Activated B cell treated with CpG ODN at 0.5 μM for 24 hours (primary cell): ENCODE measurements at regions of chr3 and their contacts with region 1.

Region 1: GRCh38 chr3:195106418-195106906 is 164.5 kb downstream of the XXYLT1 start:
- DNase-seq: peak; percentile 86
- ATAC-seq: peak; percentile 98
- H3K4me3 Mint-ChIP-seq: peak overlapping the region; percentile 67
- H3K27ac Mint-ChIP-seq: peak overlapping the region; percentile 61
- H3K4me1 Mint-ChIP-seq: peaks cover 35% of the 10 kb centered on the region
- H3K27me3 Mint-ChIP-seq: no peaks in the 10 kb centered on the region
- CTCF ChIP-seq: peak; percentile 94

Region 2: GRCh38 chr3:194871143-194871863 is 235.2 kb before region 1 on chr3:
- CTCF ChIA-PET with region 1: interaction called, 3 read pairs
- POLR2A ChIA-PET with region 1: no interaction called
- intact Hi-C with region 1: loop called (anchors 10 kb)
- DNase-seq: peak; percentile 33
- ATAC-seq: peak; percentile 91
- H3K4me3 Mint-ChIP-seq: peak overlapping the region; percentile 62
- H3K27ac Mint-ChIP-seq: peak overlapping the region; percentile 65
- H3K4me1 Mint-ChIP-seq: peaks cover 19% of the 10 kb centered on the region
- H3K27me3 Mint-ChIP-seq: peaks cover 4% of the 10 kb centered on the region
- CTCF ChIP-seq: no peak

Region 3: DNA sequence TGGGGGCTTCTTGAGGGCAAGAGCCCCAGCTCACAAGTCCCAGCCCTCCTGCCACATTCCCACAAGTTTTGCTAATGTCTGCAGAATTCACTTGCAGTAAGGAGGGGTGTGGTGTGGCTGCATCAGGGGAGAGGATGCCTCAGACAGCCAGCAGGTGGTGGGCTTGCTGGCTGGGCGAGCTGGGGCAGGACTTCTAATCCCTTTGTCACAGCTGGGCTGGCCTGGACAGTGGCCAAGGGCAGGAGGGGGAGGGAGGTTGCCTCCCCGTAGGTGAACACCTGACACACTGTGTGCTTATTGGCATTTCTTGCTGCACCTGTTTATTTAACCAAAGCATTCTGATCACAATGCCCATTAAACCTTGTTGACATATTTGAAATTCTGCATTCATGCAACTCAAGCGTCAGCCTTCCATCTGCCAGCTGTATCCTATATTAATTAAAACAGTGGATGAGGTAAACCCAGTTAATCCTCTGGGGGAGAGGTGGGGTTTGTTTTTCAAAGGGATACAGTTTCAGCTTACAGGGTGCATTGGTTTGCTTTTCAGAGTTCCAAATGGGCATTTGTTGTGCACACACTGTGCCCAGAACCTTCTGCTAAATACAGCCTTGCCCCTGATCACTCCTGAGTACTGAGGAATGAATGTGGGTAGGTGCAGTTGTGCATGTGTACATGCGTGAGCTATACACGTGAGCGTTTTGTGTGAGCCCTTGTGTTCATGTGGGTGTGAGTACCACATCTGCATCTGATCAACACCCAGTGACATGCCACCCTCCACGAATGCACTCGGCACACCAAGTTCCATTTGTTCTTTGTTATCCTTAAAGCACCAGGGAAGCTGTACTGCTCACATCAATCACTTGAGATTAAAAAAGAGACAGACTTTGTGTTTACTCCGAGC is 104.3 kb before region 1 on chr3:
- CTCF ChIA-PET with region 1: interaction called, 31 read pairs
- POLR2A ChIA-PET with region 1: no interaction called
- intact Hi-C with region 1: loop called (anchors 1 kb)
- DNase-seq: no peak
- ATAC-seq: peak; percentile 79
- H3K4me3 Mint-ChIP-seq: no peak overlapping the region
- H3K27ac Mint-ChIP-seq: no peak overlapping the region
- H3K4me1 Mint-ChIP-seq: peaks cover 31% of the 10 kb centered on the region
- H3K27me3 Mint-ChIP-seq: no peaks in the 10 kb centered on the region
- CTCF ChIP-seq: no peak

Region 4: GRCh38 chr3:195124378-195124992 is 18.0 kb after region 1 on chr3:
- CTCF ChIA-PET with region 1: interaction called, 12 read pairs
- POLR2A ChIA-PET with region 1: interaction called, 3 read pairs
- intact Hi-C with region 1: loop called (anchors 2 kb)
- DNase-seq: no peak
- ATAC-seq: no peak
- H3K4me3 Mint-ChIP-seq: no peak overlapping the region
- H3K27ac Mint-ChIP-seq: peak overlapping the region; percentile 25
- H3K4me1 Mint-ChIP-seq: peaks cover 47% of the 10 kb centered on the region
- H3K27me3 Mint-ChIP-seq: no peaks in the 10 kb centered on the region
- CTCF ChIP-seq: no peak

Region 5: DNA sequence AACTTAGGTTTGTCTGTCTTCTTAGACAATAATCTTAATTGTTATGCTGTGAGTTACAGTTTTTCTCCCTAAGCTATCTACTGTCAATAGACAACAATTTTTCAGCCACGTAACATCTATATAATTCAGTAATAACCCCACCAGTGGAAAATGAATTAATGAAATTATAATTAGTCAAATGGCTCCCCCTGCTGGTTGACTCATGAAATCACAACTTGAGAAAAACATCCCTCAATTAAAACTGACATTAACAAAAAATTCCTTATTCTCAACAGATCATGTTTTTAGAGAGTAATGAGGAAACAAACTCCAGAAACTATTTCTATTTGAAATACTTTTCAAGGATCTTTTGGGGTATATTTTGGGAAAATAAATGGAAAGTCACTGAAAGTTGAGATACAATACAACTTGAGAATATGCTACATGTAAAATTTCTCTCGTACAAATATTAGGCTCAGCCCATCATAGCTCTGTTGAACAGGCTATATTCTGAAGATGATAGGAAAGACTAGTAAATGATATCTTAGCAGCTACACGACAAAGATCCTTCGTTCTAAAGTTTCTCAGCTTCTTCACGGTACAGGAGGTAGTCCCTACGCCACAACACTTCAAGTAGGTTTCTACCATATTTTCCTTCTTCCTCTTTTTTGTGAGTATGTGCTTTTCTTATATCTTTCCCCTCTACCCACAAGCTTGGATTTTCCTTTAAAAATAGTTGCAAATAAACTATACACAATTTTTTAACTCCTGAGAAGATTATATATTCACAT is 416.0 kb after region 1 on chr3:
- CTCF ChIA-PET with region 1: no interaction called
- POLR2A ChIA-PET with region 1: no interaction called
- intact Hi-C with region 1: loop called (anchors 10 kb)
- DNase-seq: no peak
- ATAC-seq: peak; percentile 10
- H3K4me3 Mint-ChIP-seq: no peak overlapping the region
- H3K27ac Mint-ChIP-seq: peak overlapping the region; percentile 22
- H3K4me1 Mint-ChIP-seq: peaks cover 13% of the 10 kb centered on the region
- H3K27me3 Mint-ChIP-seq: no peaks in the 10 kb centered on the region
- CTCF ChIP-seq: peak; percentile 85